Natural killer cell (primary cell): ENCODE measurements at regions of chr6 and their contacts with region 1.

Region 1: GRCh38 chr6:8006208-8006607 is 58.0 kb downstream of the BLOC1S5 start:
- DNase-seq: peak in 1 of 2 donors; percentile 40
- ATAC-seq: no peak
- H3K4me3 ChIP-seq: no peak overlapping the region
- H3K4me3 Mint-ChIP-seq: no peak overlapping the region
- H3K27ac ChIP-seq: no peak overlapping the region
- H3K27ac Mint-ChIP-seq: no peak overlapping the region
- H3K4me1 ChIP-seq: no peaks in the 10 kb centered on the region
- H3K4me1 Mint-ChIP-seq: no peaks in the 10 kb centered on the region
- H3K27me3 ChIP-seq: no peaks in the 10 kb centered on the region
- H3K27me3 Mint-ChIP-seq: no peaks in the 10 kb centered on the region
- CTCF ChIP-seq: no peak

Region 2: GRCh38 chr6:7062451-7063162 is 943.6 kb before region 1 on chr6:
- intact Hi-C with region 1: no loop called
- DNase-seq: no peak
- ATAC-seq: no peak
- H3K4me3 ChIP-seq: no peak overlapping the region
- H3K4me3 Mint-ChIP-seq: no peak overlapping the region
- H3K27ac ChIP-seq: no peak overlapping the region
- H3K27ac Mint-ChIP-seq: no peak overlapping the region
- H3K4me1 ChIP-seq: no peaks in the 10 kb centered on the region
- H3K4me1 Mint-ChIP-seq: no peaks in the 10 kb centered on the region
- H3K27me3 ChIP-seq: no peaks in the 10 kb centered on the region
- H3K27me3 Mint-ChIP-seq: no peaks in the 10 kb centered on the region
- CTCF ChIP-seq: no peak

Region 3: DNA sequence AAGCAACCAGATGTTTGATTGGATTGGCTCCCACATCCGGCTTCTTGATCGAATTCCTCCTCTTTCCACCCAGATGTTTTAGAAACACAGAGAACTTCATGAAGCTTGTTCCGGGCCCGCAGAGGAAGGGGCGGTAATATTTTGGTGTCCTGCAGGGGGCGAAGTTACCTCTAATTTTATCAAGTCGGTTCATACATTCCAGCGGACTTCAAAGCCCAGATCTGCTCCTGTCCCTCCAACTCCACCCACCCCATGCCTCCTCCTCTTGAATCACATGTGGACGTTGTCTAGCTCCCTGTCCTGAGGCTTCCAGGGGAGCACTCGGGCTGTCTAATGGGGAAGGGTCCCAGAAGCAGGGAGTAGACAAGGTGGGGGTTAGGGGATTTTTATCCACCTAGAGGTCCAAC is 283.2 kb before region 1 on chr6:
- intact Hi-C with region 1: loop called (anchors 5 kb)
- DNase-seq: peak; percentile 23 to 68
- ATAC-seq: peak in 1 of 3 donors; percentile 62
- H3K4me3 ChIP-seq: no peak overlapping the region
- H3K4me3 Mint-ChIP-seq: no peak overlapping the region
- H3K27ac ChIP-seq: no peak overlapping the region
- H3K27ac Mint-ChIP-seq: no peak overlapping the region
- H3K4me1 ChIP-seq: peaks cover 18% of the 10 kb centered on the region
- H3K4me1 Mint-ChIP-seq: peaks cover 0 to 13% of the 10 kb centered on the region in 2 donors
- H3K27me3 ChIP-seq: peaks cover 12% of the 10 kb centered on the region
- H3K27me3 Mint-ChIP-seq: peaks cover 34 to 43% of the 10 kb centered on the region in 2 donors
- CTCF ChIP-seq: peak; percentile 44

Region 4: DNA sequence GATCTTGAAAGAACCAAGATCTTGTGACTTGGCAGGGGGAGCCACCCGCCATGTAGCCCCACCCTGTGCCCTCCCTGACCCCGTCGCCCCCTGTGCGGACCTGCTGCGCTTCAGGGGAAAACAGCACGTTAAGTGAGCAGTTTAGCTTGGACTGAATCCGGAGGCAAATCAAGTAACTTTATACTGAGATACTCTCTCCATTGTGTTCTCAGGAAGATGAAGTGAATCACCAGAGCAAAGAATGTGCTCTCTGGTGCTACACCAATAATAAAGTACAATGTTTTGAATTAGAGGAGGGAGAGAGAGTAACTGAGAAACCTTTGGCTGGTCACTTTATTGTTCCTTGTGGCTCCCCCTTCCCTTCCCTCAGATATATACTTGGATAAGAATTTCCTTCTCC is 179.1 kb before region 1 on chr6:
- intact Hi-C with region 1: no loop called
- DNase-seq: no peak
- ATAC-seq: no peak
- H3K4me3 ChIP-seq: no peak overlapping the region
- H3K4me3 Mint-ChIP-seq: no peak overlapping the region
- H3K27ac ChIP-seq: no peak overlapping the region
- H3K27ac Mint-ChIP-seq: no peak overlapping the region
- H3K4me1 ChIP-seq: no peaks in the 10 kb centered on the region
- H3K4me1 Mint-ChIP-seq: no peaks in the 10 kb centered on the region
- H3K27me3 ChIP-seq: no peaks in the 10 kb centered on the region
- H3K27me3 Mint-ChIP-seq: peaks cover 0 to 13% of the 10 kb centered on the region in 2 donors
- CTCF ChIP-seq: no peak

Region 5: DNA sequence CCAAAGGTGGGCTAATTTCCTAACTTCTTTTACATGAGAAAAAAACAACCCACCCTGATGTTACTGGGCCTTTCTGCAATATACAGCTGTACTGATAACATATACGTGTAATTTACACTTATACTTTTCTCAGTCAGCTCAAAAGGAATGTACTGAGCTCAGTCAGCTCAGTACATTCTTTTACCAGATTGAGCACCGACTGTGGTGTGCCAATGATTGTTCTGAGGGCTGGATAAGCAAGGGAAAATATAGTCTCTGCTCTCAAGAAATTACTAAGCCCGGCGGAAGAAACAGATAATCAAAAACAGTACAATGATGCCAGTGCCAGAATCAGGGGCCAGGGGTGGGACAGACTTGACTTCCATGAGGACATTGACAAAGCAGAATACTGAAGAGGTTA is 68.0 kb after region 1 on chr6:
- intact Hi-C with region 1: no loop called
- DNase-seq: no peak
- ATAC-seq: no peak
- H3K4me3 ChIP-seq: no peak overlapping the region
- H3K4me3 Mint-ChIP-seq: no peak overlapping the region
- H3K27ac ChIP-seq: no peak overlapping the region
- H3K27ac Mint-ChIP-seq: no peak overlapping the region
- H3K4me1 ChIP-seq: no peaks in the 10 kb centered on the region
- H3K4me1 Mint-ChIP-seq: peaks cover 0 to 6% of the 10 kb centered on the region in 2 donors
- H3K27me3 ChIP-seq: no peaks in the 10 kb centered on the region
- H3K27me3 Mint-ChIP-seq: no peaks in the 10 kb centered on the region
- CTCF ChIP-seq: no peak